Activated CD8-positive, alpha-beta T cell treated with anti-CD3 and anti-CD28 coated beads for 36 hours (primary cell): ENCODE measurements at regions of chr9 and their contacts with region 1.

Region 1: DNA sequence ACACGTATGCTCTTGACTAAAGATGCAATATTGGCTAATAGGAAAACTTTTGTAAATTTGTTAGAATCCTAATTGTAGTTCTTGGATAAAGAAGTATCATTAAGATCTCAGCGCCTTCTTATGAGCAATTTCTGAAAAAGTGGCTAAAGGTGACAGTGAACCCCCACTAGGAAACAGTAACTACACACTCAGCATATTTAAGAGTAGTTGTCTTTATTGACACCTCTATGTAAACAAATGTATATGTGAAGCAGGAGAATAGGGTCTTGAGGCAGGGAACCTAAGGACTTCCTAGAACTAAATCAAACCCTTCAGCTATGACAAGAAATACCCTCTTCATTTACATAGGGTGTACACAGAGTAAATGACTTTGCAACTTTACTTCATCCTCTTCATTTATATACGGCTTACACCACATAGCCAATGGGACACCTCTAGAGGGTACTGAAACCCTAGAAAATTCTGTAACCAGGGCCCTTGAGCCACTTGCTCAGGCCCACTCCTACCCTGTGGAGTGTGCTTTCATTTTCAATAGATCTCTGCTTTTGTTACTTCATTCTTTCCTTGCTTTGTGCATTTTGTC is 2.8 kb downstream of the NIPSNAP3A start:
- DNase-seq: no peak
- ATAC-seq: no peak
- H3K4me3 Mint-ChIP-seq: no peak overlapping the region
- H3K27ac Mint-ChIP-seq: no peak overlapping the region
- H3K4me1 Mint-ChIP-seq: peaks cover 9% of the 10 kb centered on the region
- H3K27me3 Mint-ChIP-seq: no peaks in the 10 kb centered on the region
- CTCF ChIP-seq: no peak

Region 2: GRCh38 chr9:104118916-104119315 is 631.4 kb before region 1 on chr9:
- CTCF ChIA-PET with region 1: no interaction called
- POLR2A ChIA-PET with region 1: no interaction called
- intact Hi-C with region 1: loop called (anchors 10 kb)
- DNase-seq: no peak
- ATAC-seq: no peak
- H3K4me3 Mint-ChIP-seq: no peak overlapping the region
- H3K27ac Mint-ChIP-seq: no peak overlapping the region
- H3K4me1 Mint-ChIP-seq: no peaks in the 10 kb centered on the region
- H3K27me3 Mint-ChIP-seq: no peaks in the 10 kb centered on the region
- CTCF ChIP-seq: no peak